ENCODE measurements at regions of chr5 and their contacts with region 1.

Region 1: DNA sequence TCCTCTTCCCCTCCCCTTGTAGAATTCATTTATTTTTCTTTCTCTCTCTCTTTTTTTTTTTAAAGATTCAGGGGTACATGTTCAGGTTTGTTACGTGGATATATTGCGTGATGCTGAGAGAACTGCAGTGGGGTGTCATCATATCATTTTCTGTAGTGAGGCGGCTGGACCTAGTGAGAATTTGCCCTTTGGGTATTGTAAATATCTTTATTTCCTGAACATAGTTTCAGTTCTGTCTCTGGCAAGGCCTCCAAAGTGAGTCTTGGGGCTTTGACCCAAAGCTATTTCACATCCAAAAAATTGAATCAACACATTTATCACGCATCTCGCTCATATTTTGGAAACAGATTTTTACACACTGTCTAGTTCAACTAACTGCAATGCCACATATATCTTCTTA is 25.4 kb upstream of the MYOT start:
- DNase-seq: no peak
- H3K4me3 ChIP-seq: no peak overlapping the region
- H3K27ac ChIP-seq: no peak overlapping the region
- H3K4me1 ChIP-seq: no peaks in the 10 kb centered on the region
- H3K27me3 ChIP-seq: no peaks in the 10 kb centered on the region
- CTCF ChIP-seq: no peak

Region 2: GRCh38 chr5:137492331-137492730 is 350.0 kb before region 1 on chr5:
- CTCF ChIA-PET with region 1: no interaction called
- POLR2A ChIA-PET with region 1: interaction called, 19 read pairs
- intact Hi-C with region 1: no loop called
- DNase-seq: no peak
- H3K4me3 ChIP-seq: no peak overlapping the region
- H3K27ac ChIP-seq: no peak overlapping the region
- H3K4me1 ChIP-seq: no peaks in the 10 kb centered on the region
- H3K27me3 ChIP-seq: no peaks in the 10 kb centered on the region
- CTCF ChIP-seq: no peak

Region 3: GRCh38 chr5:138011991-138012390 is 169.7 kb after region 1 on chr5:
- CTCF ChIA-PET with region 1: no interaction called
- POLR2A ChIA-PET with region 1: no interaction called
- intact Hi-C with region 1: no loop called
- DNase-seq: peak in 1 of 2 experiments; percentile 66
- H3K4me3 ChIP-seq: no peak overlapping the region
- H3K27ac ChIP-seq: no peak overlapping the region
- H3K4me1 ChIP-seq: peaks cover 10% of the 10 kb centered on the region; the same call in 1 of the 2 replicates
- H3K27me3 ChIP-seq: no peaks in the 10 kb centered on the region
- CTCF ChIP-seq: no peak

Measured in PC-9 (cell line).